WTC11 (cell line): ENCODE measurements at regions of chr17 and their contacts with region 1.

Region 1: GRCh38 chr17:1573916-1574696 is 11.5 kb upstream of the PITPNA start:
- DNase-seq: peak; percentile 87
- ATAC-seq: peak; percentile 66
- H3K4me3 Mint-ChIP-seq: no peak overlapping the region
- H3K27ac Mint-ChIP-seq: peak overlapping the region; percentile 90
- H3K4me1 Mint-ChIP-seq: peaks cover 44% of the 10 kb centered on the region
- H3K27me3 Mint-ChIP-seq: no peaks in the 10 kb centered on the region
- CTCF ChIP-seq: peak; percentile 84

Region 2: DNA sequence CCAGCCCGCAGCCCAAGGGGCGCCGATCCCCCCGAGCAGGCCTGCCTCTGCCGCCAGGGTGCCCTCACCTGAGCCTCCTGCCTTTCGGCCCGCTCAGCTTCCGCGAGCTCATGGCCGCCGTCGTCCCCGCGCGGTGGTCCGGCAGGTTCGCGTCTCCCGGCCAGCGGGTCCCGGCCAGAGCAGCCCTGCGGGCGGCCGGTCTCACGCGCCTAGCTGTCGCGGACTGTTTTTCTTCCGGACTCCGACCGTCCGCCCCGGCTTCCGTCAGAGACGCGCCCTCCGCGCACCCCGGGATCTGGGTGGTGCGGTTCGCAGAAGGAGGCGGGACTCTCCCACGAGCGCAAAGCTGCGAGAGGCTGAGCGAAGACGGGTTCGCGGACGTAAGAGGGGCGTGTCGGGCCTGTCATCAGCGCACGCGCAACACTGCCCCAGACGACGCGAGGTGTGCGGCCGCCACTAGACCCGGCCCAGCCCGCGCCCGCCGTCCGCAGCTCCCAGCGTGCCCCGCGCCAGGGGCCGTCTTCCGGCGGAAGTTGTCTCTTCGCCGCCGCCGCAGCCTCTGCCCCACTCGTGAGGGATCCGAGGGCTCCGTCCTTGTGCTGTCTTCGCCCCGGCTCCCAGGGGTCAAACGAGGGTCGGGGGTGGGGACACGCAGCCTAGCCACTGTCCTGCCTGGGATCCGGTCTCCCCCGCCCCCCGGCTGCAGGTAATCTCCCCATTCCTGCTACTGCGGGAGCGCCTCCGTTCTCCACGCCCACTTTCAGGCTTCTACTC is 57.5 kb before region 1 on chr17 and contains the start of gene INPP5K:
- CTCF ChIA-PET with region 1: interaction called, 10 read pairs
- POLR2A ChIA-PET with region 1: interaction called, 3 read pairs
- DNase-seq: peak; percentile 93
- ATAC-seq: peak; percentile 93
- H3K4me3 Mint-ChIP-seq: peak within 1 kb of the TSS; percentile 88
- H3K27ac Mint-ChIP-seq: peak within 1 kb of the TSS; percentile 97
- H3K4me1 Mint-ChIP-seq: peaks cover 14% of the 10 kb centered on the region
- H3K27me3 Mint-ChIP-seq: no peaks in the 10 kb centered on the region
- CTCF ChIP-seq: no peak
- total RNA-seq, gene INPP5K: 17.1 to 26.8 TPM (median 18.5 TPM) in 3 replicates

Region 3: GRCh38 chr17:1584192-1584591 is 10.1 kb after region 1 on chr17:
- CTCF ChIA-PET with region 1: interaction called, 46 read pairs
- POLR2A ChIA-PET with region 1: interaction called, 5 read pairs
- DNase-seq: no peak
- ATAC-seq: no peak
- H3K4me3 Mint-ChIP-seq: no peak overlapping the region
- H3K27ac Mint-ChIP-seq: 0 out of 2 replicates have a peak overlapping the region, but pooled peaks have one; percentile 45
- H3K4me1 Mint-ChIP-seq: peaks cover 41% of the 10 kb centered on the region
- H3K27me3 Mint-ChIP-seq: no peaks in the 10 kb centered on the region
- CTCF ChIP-seq: no peak

Region 4: GRCh38 chr17:1606352-1607033 is 32.4 kb after region 1 on chr17:
- CTCF ChIA-PET with region 1: interaction called, 24 read pairs
- POLR2A ChIA-PET with region 1: no interaction called
- DNase-seq: no peak
- ATAC-seq: no peak
- H3K4me3 Mint-ChIP-seq: no peak overlapping the region
- H3K27ac Mint-ChIP-seq: no peak overlapping the region
- H3K4me1 Mint-ChIP-seq: peaks cover 9% of the 10 kb centered on the region
- H3K27me3 Mint-ChIP-seq: no peaks in the 10 kb centered on the region
- CTCF ChIP-seq: no peak

Region 5: DNA sequence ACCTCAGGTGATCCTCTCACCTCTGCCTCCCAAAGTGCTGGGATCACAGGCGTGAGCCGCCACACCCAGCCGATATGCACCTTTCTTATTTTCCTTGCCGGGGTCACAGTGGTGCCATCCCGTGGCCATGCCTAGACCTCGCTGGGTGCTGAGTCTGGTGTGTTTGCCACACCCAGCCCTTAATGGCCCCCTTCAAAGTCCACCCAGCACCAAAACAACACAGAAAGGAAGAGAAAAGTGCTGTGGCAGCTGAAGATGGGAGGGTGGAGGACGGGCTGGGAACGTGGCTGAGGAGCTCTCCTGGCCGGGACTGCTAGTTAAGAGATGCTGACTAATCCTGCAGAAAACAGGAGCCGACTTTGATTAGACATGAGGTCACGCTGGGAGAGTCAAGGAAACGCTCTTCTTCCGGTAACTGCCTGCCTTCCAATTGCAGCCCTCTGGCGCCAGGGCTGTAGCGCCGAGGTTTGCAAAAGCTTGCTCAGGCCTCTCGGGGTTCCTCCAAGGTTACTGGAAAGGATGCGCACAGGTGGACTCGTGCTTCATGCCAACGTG is 43.6 kb after region 1 on chr17:
- CTCF ChIA-PET with region 1: interaction called, 16 read pairs
- POLR2A ChIA-PET with region 1: no interaction called
- DNase-seq: no peak
- ATAC-seq: no peak; the same call in 1 of the 2 replicates
- H3K4me3 Mint-ChIP-seq: no peak overlapping the region
- H3K27ac Mint-ChIP-seq: peak overlapping the region; percentile 79
- H3K4me1 Mint-ChIP-seq: no peaks in the 10 kb centered on the region; the same call in 1 of the 2 replicates
- H3K27me3 Mint-ChIP-seq: no peaks in the 10 kb centered on the region
- CTCF ChIP-seq: no peak

Region 6: GRCh38 chr17:1643293-1643998 is 69.3 kb after region 1 on chr17:
- CTCF ChIA-PET with region 1: interaction called, 133 read pairs
- POLR2A ChIA-PET with region 1: interaction called, 3 read pairs
- DNase-seq: peak; percentile 91
- ATAC-seq: peak; percentile 74
- H3K4me3 Mint-ChIP-seq: no peak overlapping the region; the same call in 1 of the 2 replicates
- H3K27ac Mint-ChIP-seq: no peak overlapping the region
- H3K4me1 Mint-ChIP-seq: peaks cover 44% of the 10 kb centered on the region
- H3K27me3 Mint-ChIP-seq: peaks cover 6% of the 10 kb centered on the region
- CTCF ChIP-seq: no peak

Region 7: GRCh38 chr17:1716076-1716995 is 142.2 kb after region 1 on chr17:
- CTCF ChIA-PET with region 1: interaction called, 11 read pairs
- POLR2A ChIA-PET with region 1: interaction called, 3 read pairs
- DNase-seq: peak; percentile 100
- ATAC-seq: peak; percentile 74
- H3K4me3 Mint-ChIP-seq: peak overlapping the region; percentile 93
- H3K27ac Mint-ChIP-seq: peak overlapping the region; percentile 99
- H3K4me1 Mint-ChIP-seq: peaks cover 24% of the 10 kb centered on the region
- H3K27me3 Mint-ChIP-seq: no peaks in the 10 kb centered on the region
- CTCF ChIP-seq: no peak